Activated CD8-positive, alpha-beta memory T cell treated with anti-CD3 and anti-CD28 coated beads, Interleukin-2, amount 10 ng/mL, durations not matched to agents 7 days and 5 days (primary cell): ENCODE measurements at regions of chr1 and their contacts with region 1.

Region 1: GRCh38 chr1:53860967-53861411 is 22.9 kb upstream of the NDC1 start:
- DNase-seq: peak; percentile 55
- ATAC-seq: peak; percentile 81
- H3K4me3 Mint-ChIP-seq: no peak overlapping the region
- H3K27ac Mint-ChIP-seq: no peak overlapping the region
- H3K4me1 Mint-ChIP-seq: no peaks in the 10 kb centered on the region
- H3K27me3 Mint-ChIP-seq: no peaks in the 10 kb centered on the region

Region 2: DNA sequence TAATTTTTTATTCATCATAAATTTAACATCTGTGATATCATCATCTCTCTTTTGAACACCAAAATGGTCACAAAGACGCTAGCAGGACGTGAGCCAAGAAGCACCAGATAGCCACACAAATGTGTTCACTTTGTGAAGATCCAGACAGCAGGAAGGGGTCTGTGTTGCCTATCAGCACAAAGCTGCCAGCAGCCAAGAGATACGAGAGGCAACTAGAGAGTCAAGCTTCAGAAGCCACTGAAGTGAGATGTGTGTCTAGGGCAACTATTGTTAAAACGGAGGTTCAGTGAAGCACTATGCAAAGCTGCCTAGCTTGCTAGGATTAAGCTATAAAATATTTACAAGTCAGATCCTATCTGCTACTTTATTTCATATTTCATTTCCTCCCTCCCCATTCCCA is 68.2 kb before region 1 on chr1:
- CTCF ChIA-PET with region 1: no interaction called
- DNase-seq: no peak
- ATAC-seq: no peak
- H3K4me3 Mint-ChIP-seq: no peak overlapping the region
- H3K27ac Mint-ChIP-seq: no peak overlapping the region
- H3K4me1 Mint-ChIP-seq: no peaks in the 10 kb centered on the region
- H3K27me3 Mint-ChIP-seq: no peaks in the 10 kb centered on the region

Region 3: DNA sequence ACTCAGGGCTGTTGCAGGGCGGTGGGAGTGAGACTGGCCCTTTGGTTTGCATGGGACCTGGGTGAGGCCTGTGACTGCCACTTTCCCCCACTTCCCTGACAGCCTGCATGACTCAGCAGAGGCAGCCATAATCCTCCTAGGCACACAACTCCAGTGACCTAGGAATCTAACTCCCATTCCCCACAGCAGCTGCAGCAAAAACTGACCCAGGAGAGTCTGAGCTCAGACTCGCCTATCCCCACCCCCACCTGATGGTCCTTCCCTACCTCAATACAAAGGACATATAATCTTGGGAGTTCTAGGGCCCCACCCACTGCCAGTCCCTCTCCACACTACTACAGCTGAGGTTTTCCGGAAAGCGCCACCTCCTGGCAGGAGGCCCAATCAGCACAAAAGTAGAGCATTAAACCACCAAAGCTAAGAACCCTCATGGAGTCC is 49.6 kb before region 1 on chr1:
- CTCF ChIA-PET with region 1: no interaction called
- DNase-seq: no peak
- ATAC-seq: no peak
- H3K4me3 Mint-ChIP-seq: no peak overlapping the region
- H3K27ac Mint-ChIP-seq: peak overlapping the region; percentile 5
- H3K4me1 Mint-ChIP-seq: peaks cover 20% of the 10 kb centered on the region
- H3K27me3 Mint-ChIP-seq: no peaks in the 10 kb centered on the region

Region 4: GRCh38 chr1:53837924-53838652 is 22.9 kb before region 1 on chr1 and contains the start of gene NDC1:
- CTCF ChIA-PET with region 1: interaction called, 10 read pairs
- DNase-seq: peak; percentile 94
- ATAC-seq: peak; percentile 91
- H3K4me3 Mint-ChIP-seq: peak within 1 kb of the TSS; percentile 100
- H3K27ac Mint-ChIP-seq: peak within 1 kb of the TSS; percentile 97
- H3K4me1 Mint-ChIP-seq: peaks cover 28% of the 10 kb centered on the region
- H3K27me3 Mint-ChIP-seq: peaks cover 2% of the 10 kb centered on the region
- total RNA-seq, gene NDC1: 26.1 to 35.5 TPM

Region 5: DNA sequence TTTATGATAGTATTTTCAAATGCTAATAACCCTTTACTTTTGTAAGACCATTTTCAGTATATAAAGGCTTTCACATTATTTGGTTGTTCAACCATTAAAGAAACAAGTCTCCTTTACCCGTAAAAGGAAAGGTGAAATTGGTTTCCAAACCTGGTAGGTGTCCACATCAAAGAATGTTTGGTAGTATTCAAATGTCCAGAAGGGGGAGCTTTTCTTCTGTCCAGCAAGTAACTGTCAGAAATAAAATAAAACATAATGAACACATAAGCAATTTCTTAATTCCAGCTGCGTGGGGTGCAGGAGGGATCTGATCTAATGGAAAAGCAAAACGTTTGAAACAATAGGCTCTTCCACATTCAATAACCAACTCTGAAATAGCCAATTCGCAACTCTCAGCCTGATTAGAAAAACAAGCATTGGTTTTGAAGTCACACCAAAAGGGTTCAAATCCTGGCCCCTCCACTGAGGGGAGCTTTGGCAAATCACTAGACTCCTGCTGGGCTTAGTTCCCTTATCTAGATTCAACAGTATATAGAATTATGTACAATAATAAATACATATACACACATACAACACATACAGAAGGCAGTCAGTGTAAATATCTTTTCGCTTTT is 17.6 kb after region 1 on chr1:
- CTCF ChIA-PET with region 1: interaction called, 33 read pairs
- DNase-seq: no peak
- ATAC-seq: no peak
- H3K4me3 Mint-ChIP-seq: no peak overlapping the region
- H3K27ac Mint-ChIP-seq: no peak overlapping the region
- H3K4me1 Mint-ChIP-seq: no peaks in the 10 kb centered on the region
- H3K27me3 Mint-ChIP-seq: no peaks in the 10 kb centered on the region

Region 6: GRCh38 chr1:53945433-53946251 is 84.7 kb after region 1 on chr1 and contains the start of gene IFT25:
- CTCF ChIA-PET with region 1: interaction called, 56 read pairs
- DNase-seq: peak; percentile 98
- ATAC-seq: peak; percentile 75
- H3K4me3 Mint-ChIP-seq: peak within 1 kb of the TSS; percentile 99
- H3K27ac Mint-ChIP-seq: peak within 1 kb of the TSS; percentile 96
- H3K4me1 Mint-ChIP-seq: peaks cover 53% of the 10 kb centered on the region
- H3K27me3 Mint-ChIP-seq: no peaks in the 10 kb centered on the region
- total RNA-seq, gene IFT25: 69.3 to 82.6 TPM

Region 7: GRCh38 chr1:53959664-53960250 is 98.8 kb after region 1 on chr1:
- CTCF ChIA-PET with region 1: interaction called, 82 read pairs
- DNase-seq: no peak
- ATAC-seq: peak; percentile 63
- H3K4me3 Mint-ChIP-seq: no peak overlapping the region
- H3K27ac Mint-ChIP-seq: no peak overlapping the region
- H3K4me1 Mint-ChIP-seq: peaks cover 18% of the 10 kb centered on the region
- H3K27me3 Mint-ChIP-seq: no peaks in the 10 kb centered on the region

Region 8: DNA sequence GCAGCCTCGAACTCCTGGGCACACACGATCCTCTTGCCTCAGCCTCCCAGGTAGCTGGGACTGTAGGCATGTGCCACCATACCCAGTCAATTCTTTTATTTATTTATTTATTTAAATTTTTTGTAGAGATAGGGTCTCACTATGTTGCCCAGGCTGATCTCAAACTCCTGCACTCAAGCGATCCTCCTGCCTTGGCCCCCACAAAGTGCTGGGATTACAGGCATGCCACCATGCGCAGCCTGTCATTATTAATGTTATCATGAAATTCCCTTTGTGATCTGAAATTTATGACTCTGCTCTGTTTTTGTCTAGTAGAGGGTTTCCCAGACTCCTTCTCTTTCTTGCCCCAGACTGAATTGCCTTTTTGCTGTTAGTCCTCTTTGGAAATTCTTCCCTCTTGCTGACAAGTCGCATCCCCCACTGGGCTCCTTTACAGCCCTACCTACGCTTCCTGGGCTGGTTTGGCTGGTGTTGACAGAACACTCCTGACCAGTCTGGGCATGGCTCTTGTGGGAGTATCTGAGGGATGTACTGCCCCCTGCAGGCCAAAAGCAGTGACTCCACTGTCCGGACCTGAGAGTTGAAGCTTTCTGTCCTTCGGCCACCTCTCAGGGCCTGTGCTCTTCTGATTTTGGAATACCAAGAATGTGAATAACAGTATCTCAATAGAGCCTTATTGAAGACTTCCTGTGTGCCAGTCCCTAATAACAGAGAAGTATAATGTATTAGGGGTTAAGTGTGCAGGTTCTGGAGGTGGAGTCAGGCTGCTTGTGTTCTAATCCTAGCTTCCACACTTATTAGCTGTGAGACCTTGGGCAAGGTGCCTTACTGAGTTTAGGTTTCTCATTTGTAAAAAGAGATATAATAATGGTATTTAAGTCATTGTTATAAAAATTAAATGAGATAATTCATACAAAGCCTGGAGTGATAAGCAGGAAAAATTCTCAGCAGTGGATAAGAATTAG is 220.6 kb after region 1 on chr1:
- CTCF ChIA-PET with region 1: interaction called, 11 read pairs
- DNase-seq: peak; percentile 73
- ATAC-seq: peak; percentile 95
- H3K4me3 Mint-ChIP-seq: no peak overlapping the region
- H3K27ac Mint-ChIP-seq: no peak overlapping the region
- H3K4me1 Mint-ChIP-seq: peaks cover 4% of the 10 kb centered on the region
- H3K27me3 Mint-ChIP-seq: no peaks in the 10 kb centered on the region